Transverse colon (tissue), 4 donors: ENCODE measurements at regions of chr18 and their contacts with region 1.

Region 1: GRCh38 chr18:13221869-13222855 is 3.6 kb downstream of the LDLRAD4 start:
- DNase-seq: peak; percentile 74
- H3K4me3 ChIP-seq: peak overlapping the region in 2 of 4 donors; percentile 0 to 32
- H3K27ac ChIP-seq: peak overlapping the region; percentile 90 to 92 (median 92)
- H3K4me1 ChIP-seq: peaks cover 38 to 62% (median 54%) of the 10 kb centered on the region in 4 donors
- H3K27me3 ChIP-seq: no peaks in the 10 kb centered on the region
- CTCF ChIP-seq: no peak
- EP300 ChIP-seq: peak; percentile 51
- POLR2A ChIP-seq: peak; percentile 32

Region 2: GRCh38 chr18:12552884-12553242 is 669.3 kb before region 1 on chr18:
- in situ Hi-C with region 1: no loop called
- intact Hi-C with region 1: no loop called
- DNase-seq: no peak
- H3K4me3 ChIP-seq: no peak overlapping the region
- H3K27ac ChIP-seq: no peak overlapping the region
- H3K4me1 ChIP-seq: peaks cover 0 to 7% (median 0%) of the 10 kb centered on the region in 4 donors
- H3K27me3 ChIP-seq: no peaks in the 10 kb centered on the region
- CTCF ChIP-seq: no peak
- EP300 ChIP-seq: no peak
- POLR2A ChIP-seq: no peak

Region 3: DNA sequence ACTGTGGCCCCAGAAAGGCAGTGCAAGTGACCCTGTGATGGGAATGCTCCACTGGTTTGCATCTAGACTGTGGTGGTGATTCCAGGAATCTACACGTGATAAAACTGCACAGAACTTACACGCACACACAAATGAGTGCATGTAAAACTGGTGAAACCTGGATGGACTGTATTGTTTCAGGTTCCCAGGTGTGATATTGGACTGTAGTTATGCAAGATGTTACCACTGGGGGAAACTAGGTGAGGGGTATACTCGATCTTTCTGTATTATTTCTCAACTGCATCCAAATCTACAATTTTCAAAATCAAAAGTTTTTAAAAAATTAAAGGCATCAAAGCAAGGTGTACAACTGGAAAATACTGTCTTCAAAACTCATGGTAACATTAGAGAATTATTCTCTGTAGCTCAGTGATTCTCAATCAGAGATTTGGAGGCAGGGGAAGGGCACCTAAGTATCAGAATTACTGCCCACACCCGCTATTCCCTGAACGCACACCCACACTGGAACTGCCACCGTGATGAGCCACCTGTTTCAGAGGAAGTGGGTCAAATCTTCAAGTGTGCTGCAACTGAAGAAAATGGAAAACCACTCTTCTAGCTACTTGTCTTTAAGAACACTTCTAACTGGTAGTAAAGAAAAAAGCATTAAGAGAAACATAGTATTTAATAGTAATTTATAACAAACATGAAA is 364.8 kb before region 1 on chr18:
- in situ Hi-C with region 1: no loop called
- intact Hi-C with region 1: no loop called
- DNase-seq: no peak
- H3K4me3 ChIP-seq: no peak overlapping the region
- H3K27ac ChIP-seq: no peak overlapping the region
- H3K4me1 ChIP-seq: peaks cover 0 to 18% (median 3%) of the 10 kb centered on the region in 4 donors
- H3K27me3 ChIP-seq: no peaks in the 10 kb centered on the region
- CTCF ChIP-seq: no peak
- EP300 ChIP-seq: no peak
- POLR2A ChIP-seq: no peak

Region 4: GRCh38 chr18:13268158-13269012 is 46.2 kb after region 1 on chr18:
- in situ Hi-C with region 1: no loop called
- intact Hi-C with region 1: loop called (anchors 5 kb)
- DNase-seq: no peak
- H3K4me3 ChIP-seq: no peak overlapping the region
- H3K27ac ChIP-seq: peak overlapping the region; percentile 58 to 74 (median 65)
- H3K4me1 ChIP-seq: peaks cover 16 to 50% (median 30%) of the 10 kb centered on the region in 4 donors
- H3K27me3 ChIP-seq: no peaks in the 10 kb centered on the region
- CTCF ChIP-seq: no peak
- EP300 ChIP-seq: no peak
- POLR2A ChIP-seq: no peak

Region 5: DNA sequence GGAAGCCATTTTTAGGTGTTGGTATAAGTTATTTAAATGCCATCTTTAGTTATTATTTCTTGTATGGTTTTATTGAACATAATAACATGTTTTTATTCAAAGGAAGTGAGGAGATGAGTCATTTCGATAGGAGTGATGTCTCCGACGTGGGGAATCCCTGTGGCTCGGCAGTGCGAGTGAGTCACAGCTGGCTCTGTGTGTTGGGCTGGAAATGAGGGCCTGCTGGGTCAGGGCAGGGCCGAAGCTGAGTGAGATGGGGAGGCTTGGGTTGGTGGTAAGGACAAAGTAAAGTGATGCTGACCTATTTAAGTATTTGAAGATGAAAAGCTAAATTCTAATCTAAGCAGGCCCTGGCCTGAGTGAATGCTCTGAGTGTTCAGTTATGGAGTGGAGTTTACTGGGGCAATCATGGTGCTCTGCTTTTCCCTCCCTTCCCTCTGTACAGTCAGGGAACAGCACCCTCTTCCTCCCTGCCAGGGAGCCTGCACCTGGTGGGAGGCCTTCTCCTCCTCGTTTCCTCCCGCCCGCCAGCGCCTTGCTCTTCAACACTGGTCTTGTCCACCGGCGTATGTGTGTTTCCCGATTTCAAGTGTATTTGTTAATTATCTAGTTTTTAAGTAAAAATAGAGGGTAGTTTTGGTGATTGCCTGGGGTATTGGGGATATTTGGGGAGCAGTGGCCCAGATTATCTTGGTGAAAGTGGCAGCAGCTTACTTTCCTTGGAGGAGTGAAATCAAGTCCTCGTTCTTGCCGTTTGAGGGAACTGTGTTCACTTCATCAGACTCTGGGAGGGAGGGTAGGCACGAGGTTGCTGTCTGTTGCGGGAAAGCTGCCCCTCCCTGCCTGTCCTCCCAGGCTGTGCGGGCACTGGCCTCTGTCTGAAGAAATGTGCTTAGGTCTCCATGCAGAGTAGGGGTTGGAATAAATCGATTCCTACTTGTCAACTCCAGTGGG is 153.4 kb after region 1 on chr18:
- in situ Hi-C with region 1: loop called in 1 of 4 experiments (anchors 25 kb)
- intact Hi-C with region 1: loop called (anchors 5 kb)
- DNase-seq: no peak
- H3K4me3 ChIP-seq: no peak overlapping the region
- H3K27ac ChIP-seq: peak overlapping the region; percentile 49 to 64 (median 52)
- H3K4me1 ChIP-seq: peaks cover 9 to 39% (median 23%) of the 10 kb centered on the region in 4 donors
- H3K27me3 ChIP-seq: no peaks in the 10 kb centered on the region
- CTCF ChIP-seq: no peak
- EP300 ChIP-seq: no peak
- POLR2A ChIP-seq: no peak

Region 6: DNA sequence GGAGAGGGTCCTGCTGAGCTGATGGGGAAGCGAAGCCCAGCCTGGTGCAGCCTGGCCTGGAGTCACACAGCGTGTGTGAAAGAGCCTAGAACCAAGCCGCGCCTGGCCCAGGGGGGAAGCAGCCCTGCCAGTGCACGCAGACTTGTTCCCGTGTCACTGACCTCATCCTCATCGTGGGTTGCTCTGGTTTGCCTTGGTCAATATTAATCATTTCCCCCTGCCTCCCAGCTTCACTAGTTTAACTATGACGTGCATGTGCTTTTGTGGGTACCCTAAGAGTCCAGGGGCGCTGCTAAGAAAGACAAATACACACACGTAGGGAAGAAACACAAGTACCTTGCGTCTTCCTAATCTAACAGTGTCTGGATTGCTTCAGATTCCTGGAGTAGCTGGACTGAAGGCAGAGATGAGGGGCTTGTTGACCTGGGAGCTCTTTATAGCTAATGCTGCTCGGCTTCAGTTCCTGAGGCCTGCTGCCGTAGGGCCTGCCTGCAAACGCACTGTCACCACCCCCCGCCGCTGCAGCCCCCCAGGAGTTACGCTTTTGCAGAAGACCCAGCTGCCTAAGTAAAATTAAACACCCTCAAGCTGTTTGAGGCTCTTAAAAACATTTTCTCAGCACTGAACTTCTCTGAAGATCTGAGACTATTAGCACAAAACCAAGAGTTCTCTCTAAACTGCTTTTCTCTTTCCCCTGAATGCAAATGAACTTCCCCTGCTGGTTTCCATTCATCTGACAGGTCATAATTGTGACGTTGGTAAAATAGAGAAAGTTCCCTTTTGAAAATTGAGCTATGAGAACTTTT is 345.0 kb after region 1 on chr18:
- in situ Hi-C with region 1: no loop called
- intact Hi-C with region 1: no loop called
- DNase-seq: peak; percentile 47
- H3K4me3 ChIP-seq: peak overlapping the region in 1 of 4 donors; percentile 10
- H3K27ac ChIP-seq: peak overlapping the region; percentile 66 to 76 (median 70)
- H3K4me1 ChIP-seq: peaks cover 6 to 43% (median 18%) of the 10 kb centered on the region in 4 donors
- H3K27me3 ChIP-seq: no peaks in the 10 kb centered on the region
- CTCF ChIP-seq: no peak
- EP300 ChIP-seq: no peak
- POLR2A ChIP-seq: peak; percentile 12